Activated CD4-positive, alpha-beta T cell treated with anti-CD3 and anti-CD28 coated beads for 36 hours (primary cell): ENCODE measurements at regions of chr14 and their contacts with region 1.

Region 1: GRCh38 chr14:52729925-52730667 is at the start of gene STYX:
- DNase-seq: peak; percentile 99
- ATAC-seq: peak; percentile 97
- H3K4me3 Mint-ChIP-seq: peak within 1 kb of the TSS; percentile 93
- H3K27ac Mint-ChIP-seq: peak within 1 kb of the TSS; percentile 90
- H3K4me1 Mint-ChIP-seq: peaks cover 33% of the 10 kb centered on the region
- H3K27me3 Mint-ChIP-seq: no peaks in the 10 kb centered on the region
- total RNA-seq, gene STYX: 13.1 to 13.3 TPM

Region 2: DNA sequence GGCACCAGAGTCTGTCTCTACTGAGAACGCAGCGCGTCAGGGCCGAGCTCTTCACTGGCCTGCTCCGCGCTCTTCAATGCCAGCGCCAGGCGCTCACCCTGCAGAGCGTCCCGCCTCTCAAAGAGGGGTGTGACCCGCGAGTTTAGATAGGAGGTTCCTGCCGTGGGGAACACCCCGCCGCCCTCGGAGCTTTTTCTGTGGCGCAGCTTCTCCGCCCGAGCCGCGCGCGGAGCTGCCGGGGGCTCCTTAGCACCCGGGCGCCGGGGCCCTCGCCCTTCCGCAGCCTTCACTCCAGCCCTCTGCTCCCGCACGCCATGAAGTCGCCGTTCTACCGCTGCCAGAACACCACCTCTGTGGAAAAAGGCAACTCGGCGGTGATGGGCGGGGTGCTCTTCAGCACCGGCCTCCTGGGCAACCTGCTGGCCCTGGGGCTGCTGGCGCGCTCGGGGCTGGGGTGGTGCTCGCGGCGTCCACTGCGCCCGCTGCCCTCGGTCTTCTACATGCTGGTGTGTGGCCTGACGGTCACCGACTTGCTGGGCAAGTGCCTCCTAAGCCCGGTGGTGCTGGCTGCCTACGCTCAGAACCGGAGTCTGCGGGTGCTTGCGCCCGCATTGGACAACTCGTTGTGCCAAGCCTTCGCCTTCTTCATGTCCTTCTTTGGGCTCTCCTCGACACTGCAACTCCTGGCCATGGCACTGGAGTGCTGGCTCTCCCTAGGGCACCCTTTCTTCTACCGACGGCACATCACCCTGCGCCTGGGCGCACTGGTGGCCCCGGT is 462.4 kb before region 1 on chr14 and contains the start of gene PTGDR:
- CTCF ChIA-PET with region 1: no interaction called
- POLR2A ChIA-PET with region 1: no interaction called
- intact Hi-C with region 1: no loop called
- DNase-seq: peak; percentile 44
- ATAC-seq: peak; percentile 74
- H3K4me3 Mint-ChIP-seq: peak within 1 kb of the TSS; percentile 70
- H3K27ac Mint-ChIP-seq: no peak within 1 kb of the TSS
- H3K4me1 Mint-ChIP-seq: peaks cover 20% of the 10 kb centered on the region
- H3K27me3 Mint-ChIP-seq: peaks cover 41% of the 10 kb centered on the region
- total RNA-seq, gene PTGDR: not detected

Region 3: DNA sequence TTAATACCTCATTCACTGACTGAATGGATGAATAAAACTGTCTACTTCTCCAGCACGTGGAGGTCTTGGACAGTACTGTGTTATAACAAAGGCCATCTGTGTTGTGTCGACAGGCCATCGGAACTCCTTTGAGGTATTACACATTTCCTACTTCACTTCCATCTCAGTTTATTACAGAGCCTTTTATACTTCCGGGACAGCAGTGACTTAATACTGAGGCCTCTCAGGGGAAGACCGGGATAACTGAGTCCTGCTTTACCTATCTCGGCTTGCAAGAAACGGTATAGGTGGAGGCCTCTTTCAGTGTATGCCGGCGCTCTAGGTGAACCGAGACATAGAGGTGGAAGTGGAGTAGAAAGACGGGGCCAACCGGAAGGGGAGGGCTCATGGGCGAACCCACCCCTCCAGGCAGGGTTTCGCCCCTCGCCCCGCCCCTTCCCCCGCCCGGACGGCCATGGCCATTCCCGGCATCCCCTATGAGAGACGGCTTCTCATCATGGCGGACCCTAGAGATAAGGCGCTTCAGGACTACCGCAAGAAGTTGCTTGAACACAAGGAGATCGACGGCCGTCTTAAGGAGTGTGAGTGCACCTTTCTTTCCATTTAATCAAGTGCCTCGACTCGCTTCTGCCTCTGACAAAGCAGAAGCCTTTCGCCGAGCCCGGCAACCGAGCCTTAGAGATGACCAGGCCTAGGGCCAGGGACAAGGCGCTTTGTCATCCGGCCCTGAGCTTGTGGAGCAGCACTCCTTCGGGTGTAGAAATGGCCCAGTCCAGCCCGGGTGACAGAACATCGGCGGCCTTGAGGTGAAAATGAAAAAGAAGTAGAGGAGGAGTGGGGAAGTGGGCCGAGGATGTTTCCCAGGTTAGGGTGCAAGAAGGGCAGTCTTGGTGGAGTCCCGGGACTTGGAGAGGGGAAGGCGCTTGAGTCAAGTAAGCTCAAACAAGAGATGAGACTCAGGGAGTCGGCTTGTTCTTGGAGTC is 23.1 kb before region 1 on chr14 and contains the start of gene PSMC6:
- CTCF ChIA-PET with region 1: interaction called, 9 read pairs
- POLR2A ChIA-PET with region 1: no interaction called
- intact Hi-C with region 1: loop called (anchors 1 kb)
- DNase-seq: peak; percentile 98
- ATAC-seq: peak; percentile 96
- H3K4me3 Mint-ChIP-seq: peak within 1 kb of the TSS; percentile 91
- H3K27ac Mint-ChIP-seq: peak within 1 kb of the TSS; percentile 92
- H3K4me1 Mint-ChIP-seq: peaks cover 41% of the 10 kb centered on the region
- H3K27me3 Mint-ChIP-seq: no peaks in the 10 kb centered on the region
- total RNA-seq, gene PSMC6: 87.0 to 121 TPM

Region 4: GRCh38 chr14:52741865-52742264 is 11.8 kb after region 1 on chr14:
- CTCF ChIA-PET with region 1: interaction called, 8 read pairs
- POLR2A ChIA-PET with region 1: interaction called, 5 read pairs
- intact Hi-C with region 1: loop called (anchors 1 kb)
- DNase-seq: no peak
- ATAC-seq: no peak
- H3K4me3 Mint-ChIP-seq: peak overlapping the region; percentile 72
- H3K27ac Mint-ChIP-seq: peak overlapping the region; percentile 95
- H3K4me1 Mint-ChIP-seq: peaks cover 65% of the 10 kb centered on the region
- H3K27me3 Mint-ChIP-seq: no peaks in the 10 kb centered on the region